Left colon (tissue), 2 donors: ENCODE measurements at regions of chr2 and their contacts with region 1.

Region 1: DNA sequence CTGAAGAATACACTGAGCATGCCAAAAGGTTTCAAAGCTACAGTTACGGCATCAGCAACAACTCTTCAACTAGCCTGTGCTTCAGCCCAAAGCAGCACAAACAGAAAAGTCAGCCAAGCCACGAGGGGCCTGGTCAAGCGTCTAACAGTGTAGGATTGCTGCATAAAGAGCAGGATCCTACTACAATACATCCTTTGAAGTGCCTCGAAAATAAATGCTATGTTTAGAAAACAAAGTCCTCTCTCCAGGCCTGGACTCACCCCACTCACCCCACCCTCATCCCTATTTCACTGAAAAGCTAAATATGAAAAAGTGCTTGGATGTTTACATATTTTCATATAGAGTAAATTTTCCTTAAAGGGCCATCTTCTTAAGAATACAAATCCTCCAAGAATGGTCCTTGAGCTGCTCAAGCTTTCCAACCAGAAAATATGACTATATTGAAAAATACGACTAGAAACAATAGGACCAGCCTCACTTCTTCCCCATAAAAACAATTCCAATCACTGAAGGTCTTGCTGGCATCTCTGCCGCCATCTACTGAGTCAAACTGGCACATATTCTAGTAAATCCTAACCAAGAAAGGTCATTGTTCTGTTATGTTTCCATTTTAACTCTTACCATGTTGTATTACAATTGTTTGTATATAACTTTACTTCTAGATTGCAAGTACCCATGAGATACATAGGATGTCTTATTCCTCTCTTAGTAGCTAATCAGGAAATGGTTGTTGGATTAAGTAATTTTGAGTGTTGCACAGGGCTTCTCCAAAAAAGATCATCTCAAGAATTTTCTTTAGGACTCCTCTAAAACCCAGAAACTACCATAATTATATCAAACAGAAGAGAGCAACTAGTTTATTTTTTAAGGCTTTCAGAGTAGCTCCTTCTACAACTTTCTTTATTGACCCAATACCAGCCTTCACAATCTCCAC is 63.6 kb downstream of the CLHC1 start:
- DNase-seq: peak in 1 of 2 donors; percentile 62
- ATAC-seq: peak; percentile 65

Region 2: DNA sequence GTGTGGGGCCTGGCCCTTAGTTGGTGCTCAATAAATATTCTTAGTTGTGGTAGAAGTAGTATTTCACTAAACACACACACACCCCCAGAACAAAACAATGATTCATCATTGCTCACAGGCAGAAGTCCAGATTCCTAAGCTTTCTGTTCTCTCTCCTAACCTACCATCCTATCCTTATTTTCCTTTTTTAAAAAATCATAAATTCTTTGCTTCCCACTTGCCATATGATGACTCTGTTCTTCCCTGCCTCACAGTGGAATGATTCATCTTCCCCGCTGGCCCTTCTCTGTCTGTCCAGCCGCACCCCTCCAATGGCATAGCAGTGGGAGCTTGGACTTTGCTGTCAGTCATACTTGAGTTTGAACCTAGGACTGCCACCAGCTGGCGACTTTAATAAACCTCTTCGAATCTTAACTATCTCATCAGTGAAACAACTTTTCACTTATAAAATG is 439.8 kb before region 1 on chr2:
- intact Hi-C with region 1: no loop called
- DNase-seq: no peak
- ATAC-seq: peak; percentile 39

Region 3: DNA sequence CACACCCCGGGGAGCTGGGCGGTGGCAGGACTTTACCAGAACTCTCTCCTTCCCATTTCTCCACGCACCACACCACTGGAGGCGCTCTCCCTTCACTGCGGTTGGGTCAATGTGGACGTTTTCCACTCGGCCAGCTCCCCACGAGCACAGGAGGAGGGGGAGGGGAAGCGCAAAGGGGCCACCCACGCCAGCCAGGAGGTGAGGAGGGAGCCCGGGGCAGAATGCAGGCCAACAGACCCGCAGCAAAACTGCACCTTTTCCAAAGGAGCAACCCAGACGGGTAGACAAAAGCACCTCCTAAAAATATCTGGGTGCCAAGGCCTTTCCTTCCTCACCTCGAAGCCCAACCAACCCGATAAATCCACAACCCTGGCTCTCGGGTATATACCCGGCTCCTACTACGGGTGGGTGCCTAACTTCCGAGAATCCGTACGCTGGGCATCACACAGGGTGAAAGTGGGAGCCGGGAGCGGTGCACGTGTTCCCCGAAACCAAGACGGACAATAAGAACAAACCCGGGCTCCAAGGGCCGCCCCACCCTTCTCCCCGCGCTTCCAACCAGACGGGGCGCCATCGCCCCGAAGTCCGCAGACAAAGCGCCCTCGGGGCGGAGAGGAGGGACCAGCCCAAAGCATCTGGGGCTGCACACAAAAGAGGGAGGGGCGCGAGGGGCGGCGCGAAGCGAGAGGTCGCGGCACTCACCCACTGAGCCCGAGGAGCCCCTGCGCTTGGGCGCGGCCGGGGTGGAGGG is 119.3 kb before region 1 on chr2:
- intact Hi-C with region 1: loop called in 1 of 2 experiments (anchors 5 kb)
- DNase-seq: peak; percentile 92
- ATAC-seq: peak; percentile 64